Gastrocnemius medialis (tissue), 4 donors: ENCODE measurements at regions of chr22 and their contacts with region 1.

Region 1: DNA sequence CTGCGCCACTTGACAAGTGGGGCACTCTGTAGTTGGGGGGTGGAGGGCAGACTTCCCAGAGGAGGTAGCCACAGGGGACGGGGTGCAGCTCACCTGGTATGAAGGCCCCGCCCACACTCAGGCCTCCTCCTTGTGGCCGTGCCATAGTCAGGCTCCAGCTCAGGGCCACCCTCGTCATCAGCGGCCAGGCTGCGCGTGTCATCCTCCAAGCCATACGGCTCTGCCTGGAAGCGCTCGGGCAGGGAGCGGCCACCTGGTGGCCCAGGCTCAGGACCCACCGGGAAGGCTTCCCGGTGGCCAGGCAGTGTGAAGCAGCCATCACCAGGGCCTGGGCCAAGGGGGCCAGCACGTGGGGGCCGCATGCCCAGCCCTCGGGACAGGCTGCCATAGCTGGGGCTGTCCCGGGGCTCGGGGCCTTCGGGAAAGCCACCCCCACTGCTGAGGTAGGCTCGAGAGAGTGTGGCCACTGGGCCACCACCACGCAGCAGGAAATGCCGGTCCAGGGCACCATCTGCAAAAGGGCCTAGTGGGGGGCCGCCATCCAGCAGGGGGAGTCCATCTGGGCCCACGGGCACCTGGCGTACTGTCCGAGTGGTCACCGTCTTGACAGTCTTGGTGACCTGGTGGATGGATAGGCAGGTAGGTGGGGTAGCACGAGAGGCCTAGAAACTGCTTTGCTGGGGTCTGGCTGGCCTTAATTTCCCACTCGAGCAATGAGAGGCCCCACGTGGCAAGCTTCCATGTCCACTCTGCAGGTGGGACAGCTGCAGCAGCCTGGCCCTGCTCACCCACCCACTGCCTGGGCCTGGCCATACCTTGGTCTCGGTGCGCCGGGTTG is 35.3 kb downstream of the ARVCF start:
- DNase-seq: no peak
- ATAC-seq: no peak
- H3K4me3 ChIP-seq: no peak overlapping the region
- H3K27ac ChIP-seq: peak overlapping the region in 3 of 4 donors; percentile 92 to 100 (median 96)
- H3K4me1 ChIP-seq: peaks cover 44% of the 10 kb centered on the region in 2 donors
- H3K27me3 ChIP-seq: no peaks in the 10 kb centered on the region
- CTCF ChIP-seq: no peak
- POLR2A ChIP-seq: no peak

Region 2: DNA sequence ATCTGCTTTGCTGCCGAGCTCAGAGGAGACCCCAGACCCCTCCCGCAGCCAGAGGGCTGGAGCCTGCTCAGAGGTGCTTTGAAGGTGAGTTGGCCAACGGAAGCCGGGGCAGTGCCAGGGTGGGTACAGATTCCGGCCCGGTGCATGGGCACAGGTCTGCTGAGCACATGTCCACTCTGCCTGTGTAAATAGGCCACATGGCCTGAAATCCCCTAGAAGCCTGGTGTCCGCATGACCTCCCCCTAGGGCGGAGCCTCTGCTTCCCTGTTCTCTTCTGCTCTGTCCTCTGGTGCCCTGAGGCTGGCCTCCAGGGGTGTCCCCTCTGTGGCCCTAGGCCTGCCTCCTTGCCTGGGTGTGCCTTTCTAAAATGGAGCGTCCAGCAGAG is 20.1 kb before region 1 on chr22:
- in situ Hi-C with region 1: no loop called
- intact Hi-C with region 1: loop called (anchors 1 kb)
- DNase-seq: no peak
- ATAC-seq: no peak
- H3K4me3 ChIP-seq: no peak overlapping the region
- H3K27ac ChIP-seq: no peak overlapping the region
- H3K4me1 ChIP-seq: peaks cover 13 to 17% of the 10 kb centered on the region in 2 donors
- H3K27me3 ChIP-seq: no peaks in the 10 kb centered on the region
- CTCF ChIP-seq: no peak
- POLR2A ChIP-seq: no peak

Region 3: GRCh38 chr22:20102203-20102780 is 121.0 kb after region 1 on chr22:
- in situ Hi-C with region 1: no loop called
- intact Hi-C with region 1: no loop called
- DNase-seq: no peak
- ATAC-seq: no peak
- H3K4me3 ChIP-seq: no peak overlapping the region
- H3K27ac ChIP-seq: no peak overlapping the region
- H3K4me1 ChIP-seq: peaks cover 22 to 32% of the 10 kb centered on the region in 2 donors
- H3K27me3 ChIP-seq: no peaks in the 10 kb centered on the region
- CTCF ChIP-seq: no peak
- POLR2A ChIP-seq: no peak